ENCODE measurements at regions of chr6 and their contacts with region 1.

Region 1: GRCh38 chr6:34154668-34155447 is 9.0 kb upstream of the GRM4 start:
- DNase-seq: peak in 1 of 2 donors; percentile 60
- ATAC-seq: peak; percentile 68 to 84 (median 78)
- H3K4me3 ChIP-seq: peak overlapping the region in 3 of 10 donors; percentile 3 to 31 (median 10)
- H3K27ac ChIP-seq: no peak overlapping the region
- H3K4me1 ChIP-seq: peaks cover 0 to 7% (median 5%) of the 10 kb centered on the region in 9 donors
- H3K27me3 ChIP-seq: peaks cover 0 to 64% (median 63%) of the 10 kb centered on the region in 7 donors
- CTCF ChIP-seq: peak; percentile 92 to 98 (median 95)

Region 2: GRCh38 chr6:33771146-33772081 is 383.4 kb before region 1 on chr6:
- intact Hi-C with region 1: loop called (anchors 1 to 5 kb)
- DNase-seq: peak; percentile 50 to 73
- ATAC-seq: peak; percentile 70 to 89 (median 82)
- H3K4me3 ChIP-seq: peak overlapping the region in 4 of 10 donors; percentile 10 to 38 (median 16)
- H3K27ac ChIP-seq: peak overlapping the region in 9 of 10 donors; percentile 8 to 69 (median 48)
- H3K4me1 ChIP-seq: peaks cover 11 to 42% (median 26%) of the 10 kb centered on the region in 9 donors
- H3K27me3 ChIP-seq: peaks cover 0 to 3% (median 0%) of the 10 kb centered on the region in 7 donors
- CTCF ChIP-seq: peak; percentile 93 to 99 (median 97)

Region 3: DNA sequence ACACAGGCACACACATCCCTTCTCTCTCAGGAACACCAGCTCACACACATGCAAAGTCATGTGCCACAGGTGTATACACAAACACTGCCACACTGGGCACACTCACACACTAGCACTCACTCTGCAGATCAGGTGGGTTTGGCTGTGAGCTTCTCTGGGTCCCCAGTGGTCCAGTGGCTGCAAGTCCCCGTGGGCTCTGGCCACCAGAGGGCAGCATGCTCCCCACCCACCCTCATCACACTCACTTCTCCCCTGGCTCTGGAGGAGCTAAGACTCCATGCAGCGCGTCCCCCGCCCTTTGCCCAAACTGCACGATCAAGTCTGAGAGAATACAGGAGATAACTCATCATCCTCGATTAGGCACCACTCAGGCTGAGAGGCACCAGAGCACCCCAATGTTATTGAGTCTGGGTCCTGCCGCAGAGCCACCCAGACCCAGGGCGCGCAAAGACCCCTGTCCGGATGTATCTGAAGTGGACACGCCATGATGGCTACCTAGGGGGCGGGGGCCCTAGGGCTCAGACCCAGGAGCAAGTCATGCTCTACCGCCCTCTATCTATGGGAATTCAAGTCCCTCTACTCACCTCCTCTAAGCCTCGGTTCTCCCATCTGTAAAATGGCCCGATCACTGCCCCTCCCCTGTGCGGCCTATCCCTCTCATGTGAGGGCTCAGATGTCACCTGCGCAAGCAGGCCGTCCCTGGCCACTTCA is 99.5 kb before region 1 on chr6:
- intact Hi-C with region 1: loop called (anchors 1 to 5 kb)
- DNase-seq: peak; percentile 34 to 65
- ATAC-seq: peak; percentile 36 to 80 (median 59)
- H3K4me3 ChIP-seq: no peak overlapping the region
- H3K27ac ChIP-seq: no peak overlapping the region
- H3K4me1 ChIP-seq: peaks cover 0 to 13% (median 0%) of the 10 kb centered on the region in 9 donors
- H3K27me3 ChIP-seq: peaks cover 0 to 72% (median 24%) of the 10 kb centered on the region in 7 donors
- CTCF ChIP-seq: peak; percentile 56 to 85 (median 76)

Region 4: DNA sequence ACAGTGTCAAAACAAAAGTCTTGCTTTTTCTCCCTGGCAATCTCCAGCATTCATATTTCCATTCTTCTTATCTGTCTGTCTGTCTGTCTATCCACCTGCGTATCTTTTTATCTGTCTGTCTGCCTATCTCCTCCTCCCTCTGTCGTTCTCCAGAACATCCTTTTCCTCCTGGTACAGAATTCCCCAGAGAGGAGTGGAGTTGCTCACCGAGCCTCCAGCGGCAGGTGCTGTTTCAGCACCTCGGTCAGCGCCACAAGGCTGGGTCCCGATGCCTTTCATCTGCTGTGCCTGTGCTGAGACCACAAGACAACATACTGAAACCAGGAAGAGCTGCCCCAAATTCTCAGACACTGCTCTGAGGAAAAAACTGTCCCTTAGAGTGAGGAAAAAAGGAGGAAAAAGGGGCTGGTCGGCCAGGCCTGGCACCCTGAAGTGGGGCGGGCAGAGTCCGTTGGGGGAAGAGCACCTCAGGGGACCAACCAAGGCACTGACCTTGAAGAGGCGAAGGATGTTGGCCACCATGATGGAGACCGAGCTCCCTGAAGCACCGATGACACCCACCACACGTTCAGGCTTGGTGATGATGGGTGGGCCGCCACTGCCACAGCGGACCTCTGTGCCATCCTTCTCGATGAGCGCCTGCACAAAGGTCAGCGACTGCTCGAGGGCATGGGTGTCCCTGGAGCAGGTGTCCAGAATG is 22.2 kb before region 1 on chr6:
- intact Hi-C with region 1: no loop called
- DNase-seq: no peak
- ATAC-seq: peak in 4 of 8 donors; percentile 33 to 64 (median 56)
- H3K4me3 ChIP-seq: no peak overlapping the region
- H3K27ac ChIP-seq: no peak overlapping the region
- H3K4me1 ChIP-seq: no peaks in the 10 kb centered on the region
- H3K27me3 ChIP-seq: peaks cover 0 to 80% (median 69%) of the 10 kb centered on the region in 7 donors
- CTCF ChIP-seq: no peak

Region 5: GRCh38 chr6:34583461-34583860 is 428.6 kb after region 1 on chr6:
- intact Hi-C with region 1: no loop called
- DNase-seq: no peak
- ATAC-seq: no peak
- H3K4me3 ChIP-seq: no peak overlapping the region
- H3K27ac ChIP-seq: no peak overlapping the region
- H3K4me1 ChIP-seq: peaks cover 3 to 23% (median 12%) of the 10 kb centered on the region in 9 donors
- H3K27me3 ChIP-seq: no peaks in the 10 kb centered on the region
- CTCF ChIP-seq: peak in 3 of 9 donors; percentile 16 to 41 (median 22)